Activated naive CD4-positive, alpha-beta T cell treated with anti-CD3 and anti-CD28 coated beads, Interleukin-2, amount 10 ng/mL, durations not matched to agents 7 days and 5 days (primary cell): ENCODE measurements at regions of chr1 and their contacts with region 1.

Region 1: DNA sequence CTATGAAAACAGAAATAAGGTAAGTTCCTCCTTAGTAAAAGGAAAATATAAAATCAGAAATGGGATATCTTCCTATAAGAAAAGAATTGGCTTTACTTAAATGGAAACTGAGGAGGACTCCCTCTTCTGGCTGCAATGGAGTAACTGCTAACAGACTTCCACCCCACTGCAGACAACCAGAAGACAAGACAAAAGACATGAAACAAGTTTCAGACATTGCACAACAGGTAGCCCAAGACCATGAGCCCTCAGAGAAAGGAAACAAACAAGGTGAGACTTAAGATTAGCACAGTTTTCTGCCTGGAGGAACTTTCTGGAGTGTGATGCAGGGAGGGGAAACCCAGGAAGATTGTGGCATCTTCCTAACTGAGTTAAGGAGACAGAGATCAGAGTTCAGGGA is 17.0 kb upstream of the OLFML2B start:
- DNase-seq: no peak
- H3K4me3 Mint-ChIP-seq: no peak overlapping the region
- H3K27ac Mint-ChIP-seq: no peak overlapping the region
- H3K4me1 Mint-ChIP-seq: no peaks in the 10 kb centered on the region
- H3K27me3 Mint-ChIP-seq: peaks cover 14% of the 10 kb centered on the region

Region 2: GRCh38 chr1:161763522-161764098 is 277.1 kb before region 1 on chr1:
- CTCF ChIA-PET with region 1: interaction called, 15 read pairs
- DNase-seq: peak; percentile 64
- H3K4me3 Mint-ChIP-seq: peak overlapping the region; percentile 27
- H3K27ac Mint-ChIP-seq: peak overlapping the region; percentile 49
- H3K4me1 Mint-ChIP-seq: peaks cover 41% of the 10 kb centered on the region
- H3K27me3 Mint-ChIP-seq: no peaks in the 10 kb centered on the region

Region 3: DNA sequence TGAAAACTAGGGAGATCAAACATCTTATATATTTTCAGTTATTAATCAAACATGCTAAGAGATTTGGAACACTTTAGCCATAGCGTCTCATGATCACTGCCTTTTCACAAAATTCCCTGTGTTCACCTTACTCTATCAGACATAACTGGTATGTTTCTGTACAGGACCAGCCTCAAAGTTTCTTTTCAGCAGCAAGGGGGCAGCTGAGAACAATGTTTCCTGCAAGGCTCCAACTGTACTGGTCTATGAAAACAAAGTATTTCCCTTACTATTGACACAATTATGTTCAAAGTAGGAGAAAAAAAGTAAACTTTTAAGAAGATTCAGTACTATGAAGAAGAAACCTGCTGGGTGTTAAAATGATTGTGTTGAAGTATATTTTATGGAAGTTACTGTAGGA is 176.1 kb before region 1 on chr1:
- CTCF ChIA-PET with region 1: interaction called, 16 read pairs
- DNase-seq: peak; percentile 26
- H3K4me3 Mint-ChIP-seq: no peak overlapping the region
- H3K27ac Mint-ChIP-seq: no peak overlapping the region
- H3K4me1 Mint-ChIP-seq: no peaks in the 10 kb centered on the region
- H3K27me3 Mint-ChIP-seq: no peaks in the 10 kb centered on the region

Region 4: DNA sequence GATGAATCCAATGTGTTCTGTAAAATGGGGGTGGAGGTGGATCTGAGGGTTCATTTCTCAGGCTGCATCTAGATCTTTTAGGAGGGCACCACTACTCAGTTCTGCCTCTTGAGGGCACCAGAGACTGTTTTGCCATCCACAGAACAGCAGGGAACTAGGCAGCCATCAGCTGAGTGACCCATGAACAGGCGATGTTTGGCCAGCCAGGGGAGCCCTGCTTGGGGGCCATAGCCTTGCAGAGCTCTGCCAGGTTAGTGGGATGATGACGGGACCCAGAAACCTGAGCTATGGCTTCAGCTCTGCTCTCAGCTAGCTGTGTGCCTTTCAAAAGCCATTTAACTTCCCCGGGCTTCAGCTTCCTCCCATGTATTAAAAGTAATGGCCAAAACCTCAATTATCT is 15.4 kb after region 1 on chr1:
- CTCF ChIA-PET with region 1: interaction called, 10 read pairs
- DNase-seq: peak; percentile 62
- H3K4me3 Mint-ChIP-seq: no peak overlapping the region
- H3K27ac Mint-ChIP-seq: no peak overlapping the region
- H3K4me1 Mint-ChIP-seq: no peaks in the 10 kb centered on the region
- H3K27me3 Mint-ChIP-seq: peaks cover 10% of the 10 kb centered on the region